Activated T-helper 1 cell treated with anti-CD3 and anti-CD28 coated beads, Interleukin-12 subunit alpha, Interleukin-12 subunit beta, Interleukin-2, Interleukin-4 antibody, amounts not matched to agents 30 ng/mL and 10 ng/mL and 1 ng/mL, durations not matched to agents 14 hours and 24 hours and 36 hours (primary cell): ENCODE measurements at regions of chr2 and their contacts with region 1.

Region 1: DNA sequence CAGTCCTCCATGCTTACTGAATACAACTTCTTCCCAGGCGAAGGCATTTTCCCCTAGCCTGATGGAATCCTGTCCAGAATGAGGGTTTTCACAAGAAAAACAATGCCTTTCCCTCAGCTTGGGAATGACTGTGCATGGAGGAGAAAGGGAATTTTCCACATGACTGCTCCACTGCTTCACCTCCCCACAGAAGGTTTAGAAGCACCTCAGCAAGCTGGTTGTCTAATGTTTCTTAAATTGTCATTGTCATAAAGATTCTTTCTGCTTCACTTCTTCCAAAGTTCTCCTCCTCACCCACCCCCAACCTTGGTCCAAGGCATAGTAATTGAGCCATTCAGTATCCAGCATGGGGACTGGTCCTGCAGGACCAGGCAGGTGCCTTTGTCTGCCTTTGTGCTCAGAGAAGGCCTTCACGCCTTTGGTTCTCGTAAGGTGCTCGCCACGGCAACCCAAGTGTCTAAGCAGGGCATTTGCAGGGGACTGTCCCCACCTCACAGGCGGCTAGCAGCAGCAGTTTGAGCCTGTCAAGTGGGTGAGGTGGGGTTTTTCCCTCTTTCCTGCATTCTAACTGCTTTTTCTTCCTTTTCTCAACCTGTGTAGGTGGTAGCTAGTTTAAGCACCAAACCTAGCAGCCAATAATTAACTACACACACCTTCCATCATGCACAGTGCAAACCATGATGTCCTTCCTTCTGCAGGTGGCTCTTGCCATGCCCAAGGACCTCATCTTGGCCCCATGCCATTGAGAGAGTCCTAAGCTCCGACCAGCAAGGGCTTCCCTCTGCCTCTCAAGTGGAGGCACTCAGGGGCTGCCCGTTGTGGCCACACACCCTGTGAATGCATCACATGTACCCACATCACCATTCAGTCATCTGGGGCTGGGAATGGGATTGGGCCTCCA is 65.7 kb upstream of the BCL2L11 start:
- DNase-seq: no peak
- H3K4me3 Mint-ChIP-seq: no peak overlapping the region
- H3K27ac Mint-ChIP-seq: peak overlapping the region; percentile 80
- H3K4me1 Mint-ChIP-seq: peaks cover 41% of the 10 kb centered on the region
- H3K27me3 Mint-ChIP-seq: peaks cover 18% of the 10 kb centered on the region

Region 2: DNA sequence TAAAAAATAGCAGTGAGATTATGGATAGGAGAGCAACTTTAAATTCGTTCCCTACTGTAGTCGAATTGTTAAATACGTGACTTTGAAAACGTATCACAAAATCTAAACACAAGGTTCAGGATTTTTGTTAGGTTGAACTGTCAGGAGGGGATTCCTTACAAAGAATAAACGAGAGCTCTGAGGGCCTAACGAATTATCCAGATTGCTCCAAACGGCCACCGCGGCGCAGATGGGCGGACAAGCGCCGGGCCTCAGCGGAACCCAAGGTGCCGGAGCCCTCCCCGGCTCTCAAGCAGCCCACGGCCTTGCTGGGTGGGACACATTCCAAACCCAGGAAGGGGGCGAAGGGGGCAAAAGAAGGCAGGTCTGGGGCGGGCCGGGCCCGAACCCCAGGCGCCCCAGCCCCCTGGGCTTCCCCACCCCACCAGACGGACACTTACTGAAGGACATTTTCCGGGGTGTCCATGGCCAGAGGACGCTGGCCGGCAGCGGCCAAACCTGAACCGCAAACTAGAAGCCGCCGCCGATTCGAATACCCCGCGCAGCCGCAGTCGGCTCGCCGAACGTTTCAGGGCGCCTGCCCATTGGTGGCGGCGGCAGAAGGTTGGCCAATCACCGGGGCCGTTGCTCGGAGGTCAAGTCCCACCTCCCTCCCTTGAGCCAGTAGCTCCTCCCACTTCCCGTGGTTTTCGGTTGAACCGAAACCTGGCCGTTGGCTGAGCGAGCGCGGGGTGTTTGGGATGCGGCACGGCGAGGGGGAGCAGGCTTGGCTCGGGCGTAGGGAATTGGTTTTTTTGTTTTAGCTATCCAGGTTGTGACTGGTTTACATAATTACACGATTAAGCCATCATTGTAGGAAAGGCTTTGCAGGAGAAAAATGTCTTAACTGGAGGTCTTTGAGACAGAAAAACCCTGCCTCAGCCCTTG is 377.2 kb before region 1 on chr2 and contains the start of gene BUB1:
- intact Hi-C with region 1: loop called (anchors 5 kb)
- DNase-seq: peak; percentile 96
- H3K4me3 Mint-ChIP-seq: peak within 1 kb of the TSS; percentile 84
- H3K27ac Mint-ChIP-seq: peak within 1 kb of the TSS; percentile 88
- H3K4me1 Mint-ChIP-seq: peaks cover 57% of the 10 kb centered on the region
- H3K27me3 Mint-ChIP-seq: peaks cover 5% of the 10 kb centered on the region
- total RNA-seq, gene BUB1: 56.1 and 61.9 TPM in 2 replicates

Region 3: DNA sequence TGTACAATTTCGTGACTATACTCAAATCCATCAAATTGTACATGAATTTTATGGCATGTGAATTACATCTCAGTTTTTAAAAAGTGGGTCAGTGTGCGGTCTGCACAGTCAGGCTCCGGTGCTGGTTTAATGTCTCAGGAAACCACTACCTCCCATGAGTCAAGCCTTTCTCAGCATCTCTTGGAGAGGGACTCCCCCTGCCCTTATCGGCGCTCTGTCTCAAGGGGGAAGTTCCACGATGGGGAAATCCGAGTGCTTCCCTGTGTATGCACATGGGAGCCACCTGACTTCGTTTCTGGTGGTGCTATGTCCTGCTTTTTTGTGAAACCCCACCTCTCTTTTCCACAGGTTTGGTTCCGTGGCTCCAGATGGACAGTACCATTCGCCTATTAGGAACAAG is 250.1 kb before region 1 on chr2:
- intact Hi-C with region 1: loop called (anchors 2 kb)
- DNase-seq: peak; percentile 66
- H3K4me3 Mint-ChIP-seq: peak overlapping the region; percentile 45
- H3K27ac Mint-ChIP-seq: peak overlapping the region; percentile 46
- H3K4me1 Mint-ChIP-seq: peaks cover 25% of the 10 kb centered on the region
- H3K27me3 Mint-ChIP-seq: peaks cover 42% of the 10 kb centered on the region

Region 4: DNA sequence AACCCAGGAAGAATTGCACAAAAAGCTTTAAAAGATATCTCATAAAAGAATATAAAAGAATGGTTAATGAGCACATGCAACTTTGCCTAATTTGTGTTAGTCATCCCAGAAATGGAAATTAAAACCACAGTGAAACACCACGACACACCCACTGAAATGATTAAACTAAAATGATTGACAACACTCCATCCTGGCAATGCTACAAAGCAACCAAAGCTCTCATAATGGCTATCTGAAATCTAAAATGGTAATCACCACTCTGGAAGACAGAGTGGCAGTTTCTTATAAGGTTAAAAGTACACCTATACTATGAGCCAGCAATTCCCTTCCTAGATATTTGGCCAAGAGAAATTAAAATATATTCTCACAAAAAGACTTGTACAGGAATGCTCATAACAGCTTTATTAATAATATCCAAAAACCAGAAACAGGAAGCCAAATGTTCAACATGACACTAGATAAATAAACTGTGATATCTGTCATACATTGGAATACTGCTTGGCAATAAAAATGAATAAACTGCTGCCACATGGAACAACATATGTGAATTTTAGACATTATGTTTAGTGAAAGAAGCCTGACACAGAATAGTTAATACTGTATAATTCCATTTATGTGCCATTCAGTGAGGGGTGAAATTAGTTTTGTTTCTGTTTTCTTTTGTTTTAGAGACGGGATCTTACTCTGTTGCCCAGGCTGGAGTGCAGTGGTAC is 39.6 kb before region 1 on chr2:
- intact Hi-C with region 1: loop called (anchors 1 kb)
- DNase-seq: no peak
- H3K4me3 Mint-ChIP-seq: no peak overlapping the region
- H3K27ac Mint-ChIP-seq: no peak overlapping the region
- H3K4me1 Mint-ChIP-seq: peaks cover 7% of the 10 kb centered on the region
- H3K27me3 Mint-ChIP-seq: peaks cover 30% of the 10 kb centered on the region

Region 5: GRCh38 chr2:111091811-111092211 is 36.8 kb after region 1 on chr2:
- intact Hi-C with region 1: loop called (anchors 1 kb)
- DNase-seq: no peak
- H3K4me3 Mint-ChIP-seq: no peak overlapping the region
- H3K27ac Mint-ChIP-seq: no peak overlapping the region
- H3K4me1 Mint-ChIP-seq: peaks cover 14% of the 10 kb centered on the region
- H3K27me3 Mint-ChIP-seq: peaks cover 61% of the 10 kb centered on the region